Endothelial cell of umbilical vein (primary cell): ENCODE measurements at regions of chr13 and their contacts with region 1.

Region 1: DNA sequence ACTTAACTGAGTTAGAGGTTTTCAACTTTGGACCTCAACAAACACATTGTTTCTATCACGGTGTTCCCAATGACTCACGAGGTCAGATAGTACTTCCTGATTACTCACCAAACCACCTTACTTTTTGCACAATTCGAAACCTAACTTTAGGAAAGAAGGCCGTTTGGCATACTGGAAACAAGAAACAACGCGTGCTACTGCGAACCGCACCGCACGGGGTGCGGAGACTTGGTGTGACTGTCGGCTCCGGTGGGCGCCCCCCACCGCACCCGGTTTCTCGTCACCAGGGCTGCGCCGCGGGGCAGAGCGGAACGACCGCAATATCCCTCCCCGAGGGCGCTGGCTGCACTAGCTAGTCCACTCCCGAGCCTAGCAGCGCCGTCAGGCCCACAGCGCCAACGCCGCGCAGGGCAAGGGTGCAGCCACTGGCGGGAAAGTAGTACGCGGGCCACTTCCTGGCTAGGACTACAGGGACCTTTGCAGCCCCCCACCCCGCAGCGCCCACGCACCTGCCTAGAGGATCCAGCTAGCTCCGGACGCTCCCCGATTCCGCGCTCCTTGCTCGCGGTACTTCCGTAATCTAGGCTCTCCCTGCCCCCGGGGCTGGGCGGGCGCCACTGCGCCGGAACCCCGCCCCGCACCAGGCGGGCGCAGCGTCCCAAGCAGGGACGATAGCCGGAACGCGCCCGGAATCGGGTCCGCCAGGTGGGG is at the start of gene PARP4:
- DNase-seq: peak; percentile 90
- H3K4me3 ChIP-seq: peak within 1 kb of the TSS; percentile 38 to 65 (median 62)
- H3K27ac ChIP-seq: peak within 1 kb of the TSS; percentile 90
- H3K4me1 ChIP-seq: peaks cover 19% of the 10 kb centered on the region
- H3K27me3 ChIP-seq: no peaks in the 10 kb centered on the region
- CTCF ChIP-seq: no peak
- POLR2A ChIP-seq: peak; percentile 81
- total RNA-seq, gene PARP4: 64.3 and 71.7 TPM in 2 replicates

Region 2: DNA sequence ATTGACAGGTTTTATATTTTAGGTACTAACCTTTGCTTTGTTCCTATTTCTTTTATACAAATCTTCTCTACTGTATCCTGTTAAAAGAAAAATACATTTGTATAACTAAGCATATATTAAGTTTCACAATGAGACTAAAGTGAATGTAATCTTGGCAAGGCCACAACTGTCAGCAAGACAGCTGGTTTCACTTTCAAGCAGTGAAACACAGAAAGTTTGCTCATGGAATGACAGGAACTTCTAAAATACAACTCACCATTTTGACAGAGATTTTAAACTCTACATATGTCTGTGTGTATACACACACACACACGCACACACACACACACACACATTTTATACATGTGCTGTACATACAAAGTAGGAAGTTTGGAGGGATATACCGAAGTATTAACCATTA is 53.1 kb before region 1 on chr13:
- CTCF ChIA-PET with region 1: no interaction called
- POLR2A ChIA-PET with region 1: no interaction called
- dilution Hi-C with region 1: no loop called
- intact Hi-C with region 1: no loop called
- DNase-seq: no peak
- H3K4me3 ChIP-seq: no peak overlapping the region
- H3K27ac ChIP-seq: no peak overlapping the region
- H3K4me1 ChIP-seq: no peaks in the 10 kb centered on the region
- H3K27me3 ChIP-seq: no peaks in the 10 kb centered on the region
- CTCF ChIP-seq: no peak
- POLR2A ChIP-seq: no peak

Region 3: GRCh38 chr13:24922745-24923591 is 410.6 kb after region 1 on chr13:
- CTCF ChIA-PET with region 1: no interaction called
- POLR2A ChIA-PET with region 1: no interaction called
- dilution Hi-C with region 1: no loop called
- intact Hi-C with region 1: loop called (anchors 5 kb)
- DNase-seq: peak; percentile 98
- H3K4me3 ChIP-seq: peak overlapping the region; percentile 65 to 94 (median 84)
- H3K27ac ChIP-seq: peak overlapping the region; percentile 96
- H3K4me1 ChIP-seq: peaks cover 19% of the 10 kb centered on the region
- H3K27me3 ChIP-seq: peaks cover 0 to 4% of the 10 kb centered on the region in 2 experiments
- CTCF ChIP-seq: no peak
- POLR2A ChIP-seq: peak; percentile 86